ENCODE measurements at regions of chr13 and their contacts with region 1.

Region 1: DNA sequence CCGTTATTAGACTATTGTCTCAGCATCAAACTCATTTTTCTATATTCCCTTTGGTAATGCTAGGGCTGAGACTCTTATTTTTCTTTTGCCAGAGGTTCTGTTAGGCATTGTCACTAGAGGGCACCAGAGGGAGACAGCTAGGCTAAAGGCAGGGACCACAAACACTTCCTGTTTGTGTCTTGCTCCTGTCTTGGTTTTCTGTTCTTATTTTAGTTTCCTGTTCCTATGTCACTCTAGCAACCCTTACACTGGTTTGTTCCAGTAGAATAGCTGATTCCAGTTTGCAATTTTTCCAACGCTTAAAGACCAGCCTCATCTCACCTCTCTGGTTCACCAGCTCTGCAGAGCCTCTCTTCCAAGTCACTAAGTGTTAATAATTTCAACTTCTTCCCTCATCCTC is 772.0 kb downstream of the DIAPH3 start:
- DNase-seq: peak; percentile 44
- H3K4me3 ChIP-seq: no peak overlapping the region
- H3K27ac ChIP-seq: no peak overlapping the region
- H3K4me1 ChIP-seq: no peaks in the 10 kb centered on the region
- H3K27me3 ChIP-seq: no peaks in the 10 kb centered on the region
- CTCF ChIP-seq: peak; percentile 87 to 91

Region 2: GRCh38 chr13:59269476-59269875 is 122.2 kb before region 1 on chr13:
- CTCF ChIA-PET with region 1: no interaction called
- dilution Hi-C with region 1: no loop called
- in situ Hi-C with region 1: no loop called
- intact Hi-C with region 1: no loop called
- DNase-seq: peak; percentile 0
- H3K4me3 ChIP-seq: no peak overlapping the region
- H3K27ac ChIP-seq: no peak overlapping the region
- H3K4me1 ChIP-seq: no peaks in the 10 kb centered on the region
- H3K27me3 ChIP-seq: no peaks in the 10 kb centered on the region
- CTCF ChIP-seq: no peak

Region 3: DNA sequence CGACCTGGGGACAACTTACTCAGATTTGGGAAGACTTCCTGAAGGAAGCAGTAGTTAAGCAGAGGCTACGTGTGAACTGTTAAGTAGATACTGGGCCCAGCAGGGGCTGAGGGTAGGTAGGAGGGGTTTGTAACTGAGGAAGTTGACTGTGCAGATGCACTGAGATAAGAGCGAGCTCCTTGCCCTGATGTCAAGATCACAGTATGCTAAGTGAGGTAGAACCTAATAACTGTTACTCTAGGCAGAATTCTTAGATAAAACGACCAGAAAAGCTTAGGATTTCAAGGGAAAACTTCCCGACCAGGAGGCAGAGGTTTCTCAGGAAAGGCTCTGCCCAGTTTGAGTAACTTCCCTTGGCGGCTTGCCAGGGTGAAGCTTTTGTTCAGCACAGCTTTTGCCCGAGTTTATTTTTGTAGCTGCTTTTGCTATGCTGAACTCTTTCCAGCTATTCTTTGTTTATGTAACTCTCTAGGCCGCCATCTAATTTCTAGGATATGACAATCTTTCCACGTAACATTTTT is 139.9 kb after region 1 on chr13:
- CTCF ChIA-PET with region 1: no interaction called
- dilution Hi-C with region 1: no loop called
- in situ Hi-C with region 1: no loop called
- intact Hi-C with region 1: no loop called
- DNase-seq: peak; percentile 51
- H3K4me3 ChIP-seq: no peak overlapping the region
- H3K27ac ChIP-seq: no peak overlapping the region
- H3K4me1 ChIP-seq: peaks cover 17% of the 10 kb centered on the region
- H3K27me3 ChIP-seq: no peaks in the 10 kb centered on the region
- CTCF ChIP-seq: no peak

Region 4: GRCh38 chr13:59771272-59771671 is 379.6 kb after region 1 on chr13:
- CTCF ChIA-PET with region 1: no interaction called
- dilution Hi-C with region 1: no loop called
- in situ Hi-C with region 1: loop called in 1 of 2 experiments (anchors 25 kb)
- intact Hi-C with region 1: loop called (anchors 1 kb)
- DNase-seq: no peak
- H3K4me3 ChIP-seq: no peak overlapping the region
- H3K27ac ChIP-seq: no peak overlapping the region
- H3K4me1 ChIP-seq: peaks cover 30% of the 10 kb centered on the region
- H3K27me3 ChIP-seq: no peaks in the 10 kb centered on the region
- CTCF ChIP-seq: peak; percentile 68 to 69

Region 5: DNA sequence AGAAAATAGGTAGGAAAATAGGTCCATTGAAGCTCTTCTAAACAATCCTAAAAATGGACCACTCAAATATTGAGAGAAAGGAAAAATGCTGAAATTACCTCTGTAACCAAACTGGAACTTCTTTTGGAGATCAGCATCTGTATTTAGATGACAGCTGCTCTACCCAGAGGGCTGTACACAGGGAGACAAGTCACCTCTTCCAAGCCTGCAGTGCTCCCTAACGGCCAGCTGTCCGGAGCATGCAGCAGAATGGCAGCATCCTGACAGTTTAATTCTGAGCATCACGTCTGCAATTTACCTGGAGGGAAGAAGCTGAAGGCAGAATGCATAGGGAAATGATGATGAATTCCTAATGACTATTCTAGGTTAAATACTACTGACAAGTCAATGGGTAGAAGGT is 834.8 kb after region 1 on chr13:
- CTCF ChIA-PET with region 1: no interaction called
- dilution Hi-C with region 1: no loop called
- in situ Hi-C with region 1: no loop called
- intact Hi-C with region 1: loop called (anchors 10 kb)
- DNase-seq: peak; percentile 8
- H3K4me3 ChIP-seq: no peak overlapping the region
- H3K27ac ChIP-seq: no peak overlapping the region
- H3K4me1 ChIP-seq: no peaks in the 10 kb centered on the region
- H3K27me3 ChIP-seq: no peaks in the 10 kb centered on the region
- CTCF ChIP-seq: peak in 1 of 2 donors; percentile 27

Region 6: DNA sequence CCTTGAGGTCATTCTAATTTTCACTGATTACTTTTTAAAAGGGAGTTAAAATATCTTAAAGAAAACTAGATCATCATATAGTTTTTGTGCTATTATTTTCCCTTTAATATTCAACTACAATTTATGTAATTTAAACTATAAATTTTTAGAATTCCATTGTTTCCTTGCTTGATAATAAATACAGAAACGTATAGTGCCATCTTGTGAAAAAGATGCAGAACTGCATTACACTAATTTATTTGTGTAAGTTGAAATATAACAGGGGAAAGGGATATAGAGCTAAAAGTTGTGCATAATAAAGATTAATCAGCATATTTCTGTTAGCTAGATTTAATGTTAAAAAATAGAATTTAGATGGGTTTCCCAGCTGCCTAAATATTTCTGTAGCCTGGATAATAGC is 943.8 kb after region 1 on chr13:
- CTCF ChIA-PET with region 1: no interaction called
- dilution Hi-C with region 1: no loop called
- in situ Hi-C with region 1: loop called (anchors 25 kb)
- intact Hi-C with region 1: loop called (anchors 5 kb)
- DNase-seq: no peak
- H3K4me3 ChIP-seq: no peak overlapping the region
- H3K27ac ChIP-seq: no peak overlapping the region
- H3K4me1 ChIP-seq: no peaks in the 10 kb centered on the region
- H3K27me3 ChIP-seq: peaks cover 4% of the 10 kb centered on the region
- CTCF ChIP-seq: peak; percentile 52 to 60

Measured in mammary epithelial cell (primary cell).